ENCODE measurements at regions of chr15 and their contacts with region 1.

Region 1: DNA sequence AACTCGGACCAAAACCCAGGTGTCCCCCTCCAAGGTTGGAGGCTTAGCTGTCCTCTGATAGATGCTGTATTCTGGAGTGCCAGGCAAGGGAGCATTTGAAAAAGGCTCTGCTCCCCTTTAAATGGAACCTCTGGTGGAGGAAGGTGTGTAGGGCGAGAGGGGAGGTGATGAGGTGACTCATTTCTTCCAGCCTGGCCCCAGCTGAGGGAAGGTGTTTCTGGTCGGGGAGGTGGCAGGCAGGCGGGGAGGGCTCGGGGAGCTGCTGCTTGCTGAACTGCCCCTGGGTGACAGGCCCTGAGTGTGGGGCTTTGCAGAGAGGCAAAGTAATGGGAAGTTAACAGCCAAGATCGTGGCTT is 18.8 kb downstream of the PSTPIP1 start:
- DNase-seq: peak; percentile 77 to 97 (median 80)
- H3K4me3 ChIP-seq: peak overlapping the region; percentile 33 to 47
- H3K4me3 Mint-ChIP-seq: peak overlapping the region; percentile 74 to 94 (median 83)
- H3K27ac ChIP-seq: peak overlapping the region; percentile 67
- H3K27ac Mint-ChIP-seq: peak overlapping the region; percentile 82 to 100 (median 95)
- H3K4me1 ChIP-seq: peaks cover 99% of the 10 kb centered on the region
- H3K4me1 Mint-ChIP-seq: peaks cover 52 to 98% (median 74%) of the 10 kb centered on the region in 4 donors
- H3K27me3 ChIP-seq: no peaks in the 10 kb centered on the region
- H3K27me3 Mint-ChIP-seq: peaks cover 0 to 2% of the 10 kb centered on the region in 2 donors

Region 2: DNA sequence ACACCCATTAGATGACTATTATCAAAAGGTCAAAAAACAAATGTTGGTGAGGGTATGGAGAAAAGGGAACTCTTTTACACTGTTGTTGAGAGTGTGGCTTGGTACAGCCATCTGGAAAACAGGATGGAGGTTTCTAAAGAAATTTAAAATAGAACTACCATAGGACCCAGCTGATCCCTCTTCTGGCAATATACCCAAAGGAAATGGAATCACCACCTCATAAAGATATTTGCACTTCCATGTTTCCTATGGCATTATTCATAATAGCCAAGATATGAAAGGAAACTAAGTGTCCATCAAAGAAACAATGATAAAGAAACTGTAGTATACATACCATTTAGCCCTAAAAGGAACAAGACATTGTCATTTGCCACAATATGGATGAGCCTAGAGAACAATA is 294.9 kb before region 1 on chr15:
- CTCF ChIA-PET with region 1: no interaction called
- POLR2A ChIA-PET with region 1: no interaction called
- intact Hi-C with region 1: no loop called
- DNase-seq: no peak
- H3K4me3 ChIP-seq: no peak overlapping the region
- H3K4me3 Mint-ChIP-seq: no peak overlapping the region
- H3K27ac ChIP-seq: no peak overlapping the region
- H3K27ac Mint-ChIP-seq: no peak overlapping the region
- H3K4me1 ChIP-seq: no peaks in the 10 kb centered on the region
- H3K4me1 Mint-ChIP-seq: peaks cover 0 to 9% (median under 1%) of the 10 kb centered on the region in 4 donors
- H3K27me3 ChIP-seq: no peaks in the 10 kb centered on the region
- H3K27me3 Mint-ChIP-seq: no peaks in the 10 kb centered on the region

Region 3: GRCh38 chr15:76987926-76988860 is 25.6 kb before region 1 on chr15:
- CTCF ChIA-PET with region 1: interaction called, 10 read pairs
- POLR2A ChIA-PET with region 1: interaction called, 472 read pairs
- intact Hi-C with region 1: no loop called
- DNase-seq: peak in 1 of 5 donors; percentile 10
- H3K4me3 ChIP-seq: peak overlapping the region in 1 of 2 donors; percentile 14
- H3K4me3 Mint-ChIP-seq: peak overlapping the region in 7 of 8 donors; percentile 52 to 86 (median 77)
- H3K27ac ChIP-seq: peak overlapping the region; percentile 27
- H3K27ac Mint-ChIP-seq: peak overlapping the region; percentile 38 to 92 (median 84)
- H3K4me1 ChIP-seq: peaks cover 33% of the 10 kb centered on the region
- H3K4me1 Mint-ChIP-seq: peaks cover 24 to 63% (median 31%) of the 10 kb centered on the region in 4 donors
- H3K27me3 ChIP-seq: no peaks in the 10 kb centered on the region
- H3K27me3 Mint-ChIP-seq: no peaks in the 10 kb centered on the region

Region 4: DNA sequence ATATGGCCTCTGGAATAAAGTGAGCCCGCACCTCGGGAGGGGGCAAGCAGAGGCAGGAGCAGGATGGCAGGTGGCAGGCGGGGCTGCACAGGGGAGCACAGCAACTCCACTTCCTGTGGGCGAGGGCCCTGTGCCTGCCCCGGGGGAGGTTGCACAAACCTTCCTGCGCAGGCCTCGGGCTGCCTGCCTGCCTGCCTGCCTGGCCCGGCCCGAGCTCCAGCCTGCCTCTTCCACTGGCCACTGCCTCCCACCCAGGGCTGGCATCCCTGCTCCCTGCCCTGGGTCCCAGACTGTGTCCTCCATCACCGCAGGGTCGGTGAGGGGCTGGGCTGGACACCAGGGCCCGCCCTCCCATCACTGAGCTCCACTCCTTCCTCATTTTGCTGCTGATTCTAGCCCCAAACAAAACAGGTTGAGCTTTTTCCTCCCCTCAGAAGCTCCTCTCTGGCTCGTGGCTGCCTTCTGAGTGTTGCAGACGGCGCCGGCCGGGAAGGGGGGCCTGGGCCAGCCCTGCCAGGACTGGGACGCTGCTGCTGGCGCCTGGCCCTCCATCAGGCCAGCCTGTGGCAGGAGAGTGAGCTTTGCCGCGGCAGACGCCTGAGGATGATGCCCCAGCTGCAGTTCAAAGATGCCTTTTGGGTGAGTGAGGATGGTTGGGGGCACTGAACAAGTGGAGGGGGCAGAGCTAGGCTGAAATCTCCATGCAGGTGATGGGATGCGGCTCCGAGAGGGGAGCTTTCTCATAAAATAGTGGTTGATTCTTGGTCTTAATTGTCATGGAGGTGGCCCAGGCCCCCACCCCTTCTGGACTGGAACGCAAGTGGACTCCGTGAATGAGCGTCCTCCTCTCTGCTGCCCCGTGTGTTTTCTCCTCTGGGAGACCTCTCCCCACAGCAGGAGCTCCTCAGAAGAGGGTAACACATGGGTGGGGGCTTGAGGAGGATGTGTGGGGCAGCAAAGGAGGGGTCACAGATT is 18.5 kb before region 1 on chr15 and contains the start of gene PSTPIP1:
- CTCF ChIA-PET with region 1: interaction called, 35 read pairs
- POLR2A ChIA-PET with region 1: interaction called, 472 read pairs
- intact Hi-C with region 1: loop called (anchors 1 kb)
- DNase-seq: peak; percentile 65 to 76 (median 74)
- H3K4me3 ChIP-seq: peak within 1 kb of the TSS; percentile 94 to 96
- H3K4me3 Mint-ChIP-seq: peak within 1 kb of the TSS; percentile 94 to 97 (median 96)
- H3K27ac ChIP-seq: peak within 1 kb of the TSS; percentile 79
- H3K27ac Mint-ChIP-seq: peak within 1 kb of the TSS; percentile 92 to 97 (median 96)
- H3K4me1 ChIP-seq: peaks cover 56% of the 10 kb centered on the region
- H3K4me1 Mint-ChIP-seq: peaks cover 38 to 92% (median 52%) of the 10 kb centered on the region in 4 donors
- H3K27me3 ChIP-seq: no peaks in the 10 kb centered on the region
- H3K27me3 Mint-ChIP-seq: no peaks in the 10 kb centered on the region
- total RNA-seq, gene PSTPIP1: 225 to 233 TPM

Region 5: GRCh38 chr15:77002954-77003912 is 10.5 kb before region 1 on chr15:
- CTCF ChIA-PET with region 1: interaction called, 11 read pairs
- POLR2A ChIA-PET with region 1: interaction called, 472 read pairs
- intact Hi-C with region 1: loop called (anchors 1 kb)
- DNase-seq: peak; percentile 71 to 88 (median 76)
- H3K4me3 ChIP-seq: peak overlapping the region in 1 of 2 donors; percentile 33
- H3K4me3 Mint-ChIP-seq: peak overlapping the region; percentile 69 to 85 (median 80)
- H3K27ac ChIP-seq: peak overlapping the region; percentile 68
- H3K27ac Mint-ChIP-seq: peak overlapping the region; percentile 92 to 96 (median 94)
- H3K4me1 ChIP-seq: peaks cover 98% of the 10 kb centered on the region
- H3K4me1 Mint-ChIP-seq: peaks cover 53 to 96% (median 80%) of the 10 kb centered on the region in 4 donors
- H3K27me3 ChIP-seq: no peaks in the 10 kb centered on the region
- H3K27me3 Mint-ChIP-seq: no peaks in the 10 kb centered on the region

Region 6: GRCh38 chr15:77024271-77025082 is 10.7 kb after region 1 on chr15:
- CTCF ChIA-PET with region 1: interaction called, 21 read pairs
- POLR2A ChIA-PET with region 1: interaction called, 24 read pairs
- intact Hi-C with region 1: loop called (anchors 1 kb)
- DNase-seq: peak; percentile 55 to 66 (median 59)
- H3K4me3 ChIP-seq: no peak overlapping the region
- H3K4me3 Mint-ChIP-seq: peak overlapping the region in 1 of 8 donors; percentile 70
- H3K27ac ChIP-seq: peak overlapping the region; percentile 41
- H3K27ac Mint-ChIP-seq: peak overlapping the region; percentile 77 to 100 (median 98)
- H3K4me1 ChIP-seq: peaks cover 48% of the 10 kb centered on the region
- H3K4me1 Mint-ChIP-seq: peaks cover 28 to 50% (median 43%) of the 10 kb centered on the region in 4 donors
- H3K27me3 ChIP-seq: no peaks in the 10 kb centered on the region
- H3K27me3 Mint-ChIP-seq: no peaks in the 10 kb centered on the region

Measured in CD4-positive, alpha-beta memory T cell (primary cell).